ENCODE measurements at regions of chr2 and their contacts with region 1.

Region 1: GRCh38 chr2:177247693-177248262 is 16.7 kb downstream of the NFE2L2 start:
- DNase-seq: no peak
- H3K4me3 Mint-ChIP-seq: no peak overlapping the region
- H3K27ac Mint-ChIP-seq: peak overlapping the region; percentile 54
- H3K4me1 Mint-ChIP-seq: peaks cover 47% of the 10 kb centered on the region
- H3K27me3 Mint-ChIP-seq: no peaks in the 10 kb centered on the region
- CTCF ChIP-seq: no peak

Region 2: GRCh38 chr2:177275041-177276020 is 27.6 kb after region 1 on chr2:
- CTCF ChIA-PET with region 1: no interaction called
- POLR2A ChIA-PET with region 1: interaction called, 10 read pairs
- intact Hi-C with region 1: no loop called
- DNase-seq: peak; percentile 93
- H3K4me3 Mint-ChIP-seq: peak overlapping the region; percentile 62
- H3K27ac Mint-ChIP-seq: peak overlapping the region; percentile 91
- H3K4me1 Mint-ChIP-seq: peaks cover 20% of the 10 kb centered on the region
- H3K27me3 Mint-ChIP-seq: no peaks in the 10 kb centered on the region
- CTCF ChIP-seq: no peak

Region 3: DNA sequence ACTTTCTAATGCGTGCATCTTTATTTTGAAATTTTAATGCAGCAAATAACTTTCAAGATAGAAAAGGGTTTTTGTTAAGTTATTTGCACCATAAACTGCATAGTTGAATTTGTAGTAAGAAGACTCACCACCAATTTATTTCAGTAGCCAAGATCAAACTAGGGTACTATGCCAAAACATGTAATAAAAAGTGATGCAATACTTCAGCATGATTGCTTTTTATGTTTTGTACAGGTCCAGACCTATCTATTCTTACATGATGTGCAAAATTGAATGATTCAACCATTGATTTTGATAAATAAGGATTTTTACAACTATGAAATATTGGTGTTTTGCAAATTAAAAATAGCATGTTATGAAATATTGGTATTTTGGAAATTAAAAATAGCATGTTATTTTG is 171.5 kb after region 1 on chr2:
- CTCF ChIA-PET with region 1: no interaction called
- POLR2A ChIA-PET with region 1: no interaction called
- intact Hi-C with region 1: no loop called
- DNase-seq: peak; percentile 77
- H3K4me3 Mint-ChIP-seq: peak overlapping the region; percentile 44
- H3K27ac Mint-ChIP-seq: peak overlapping the region; percentile 49
- H3K4me1 Mint-ChIP-seq: peaks cover 7% of the 10 kb centered on the region
- H3K27me3 Mint-ChIP-seq: no peaks in the 10 kb centered on the region
- CTCF ChIP-seq: no peak

Measured in MCF 10A (cell line).